Activated B cell treated with CpG ODN at 0.5 μM for 24 hours (primary cell): ENCODE measurements at regions of chr11 and their contacts with region 1.

Region 1: GRCh38 chr11:93741094-93741881 is at the starts of genes C11orf54 and TAF1D:
- DNase-seq: peak; percentile 88
- ATAC-seq: peak; percentile 91
- H3K4me3 Mint-ChIP-seq: peak within 1 kb of the TSS; percentile 100
- H3K27ac Mint-ChIP-seq: peak within 1 kb of the TSS; percentile 100
- H3K4me1 Mint-ChIP-seq: peaks cover 58% of the 10 kb centered on the region
- H3K27me3 Mint-ChIP-seq: no peaks in the 10 kb centered on the region
- CTCF ChIP-seq: no peak
- total RNA-seq, gene C11orf54: 23.7 and 30.1 TPM in 2 replicates
- total RNA-seq, gene TAF1D: 258 and 315 TPM in 2 replicates

Region 2: GRCh38 chr11:93623179-93623578 is 118.1 kb before region 1 on chr11:
- CTCF ChIA-PET with region 1: no interaction called
- POLR2A ChIA-PET with region 1: interaction called, 11 read pairs
- intact Hi-C with region 1: no loop called
- DNase-seq: no peak
- ATAC-seq: no peak
- H3K4me3 Mint-ChIP-seq: no peak overlapping the region
- H3K27ac Mint-ChIP-seq: no peak overlapping the region
- H3K4me1 Mint-ChIP-seq: no peaks in the 10 kb centered on the region
- H3K27me3 Mint-ChIP-seq: peaks cover 23% of the 10 kb centered on the region
- CTCF ChIP-seq: no peak

Region 3: DNA sequence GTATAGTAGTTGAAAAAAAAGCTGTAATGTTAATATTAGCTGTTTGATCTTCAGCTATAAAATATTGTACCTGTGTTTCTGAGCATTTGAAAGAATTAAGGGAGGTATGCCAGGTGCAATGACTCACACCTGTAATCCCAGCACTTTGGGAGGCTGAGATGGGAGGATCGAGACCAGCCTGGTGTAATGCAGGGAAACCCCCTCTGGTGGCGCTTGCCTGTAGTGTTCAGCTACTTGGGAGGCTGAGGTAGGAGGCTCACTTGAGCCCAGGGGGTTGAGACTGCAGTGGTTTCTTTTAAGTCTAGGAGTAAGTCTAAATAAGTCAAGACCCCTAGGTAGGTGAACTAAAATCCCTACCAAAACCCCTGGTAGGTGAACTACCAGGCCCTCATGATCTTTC is 37.1 kb before region 1 on chr11:
- CTCF ChIA-PET with region 1: no interaction called
- POLR2A ChIA-PET with region 1: interaction called, 16 read pairs
- intact Hi-C with region 1: no loop called
- DNase-seq: no peak
- ATAC-seq: no peak
- H3K4me3 Mint-ChIP-seq: no peak overlapping the region
- H3K27ac Mint-ChIP-seq: no peak overlapping the region
- H3K4me1 Mint-ChIP-seq: peaks cover 8% of the 10 kb centered on the region
- H3K27me3 Mint-ChIP-seq: no peaks in the 10 kb centered on the region
- CTCF ChIP-seq: no peak

Region 4: DNA sequence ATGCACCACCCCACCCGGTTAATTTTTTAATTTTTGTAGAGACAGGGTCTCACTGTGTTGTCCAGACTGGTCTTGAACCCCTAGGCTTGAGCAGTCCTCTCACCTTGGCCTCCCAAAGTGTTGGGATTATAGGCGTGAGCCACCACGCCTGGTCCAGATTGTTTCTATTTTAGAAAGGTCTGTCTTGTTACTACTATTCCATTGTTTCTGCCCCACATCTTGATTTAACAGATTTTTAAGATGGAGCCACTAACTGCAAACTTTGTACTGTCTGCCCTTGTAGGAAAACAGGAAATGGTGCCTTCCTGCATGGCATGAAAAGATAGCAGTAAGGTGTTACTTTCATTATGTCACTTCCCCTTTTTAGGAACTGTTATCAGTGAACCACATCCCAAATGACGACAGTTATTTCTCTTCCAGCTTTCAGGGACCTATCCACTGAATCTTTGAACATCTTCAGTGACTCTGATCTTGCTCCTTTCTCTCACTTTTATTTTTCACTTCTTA is 23.2 kb before region 1 on chr11:
- CTCF ChIA-PET with region 1: interaction called, 5 read pairs
- POLR2A ChIA-PET with region 1: interaction called, 99 read pairs
- intact Hi-C with region 1: loop called (anchors 1 kb)
- DNase-seq: no peak
- ATAC-seq: peak; percentile 82
- H3K4me3 Mint-ChIP-seq: peak overlapping the region; percentile 58
- H3K27ac Mint-ChIP-seq: peak overlapping the region; percentile 86
- H3K4me1 Mint-ChIP-seq: peaks cover 33% of the 10 kb centered on the region
- H3K27me3 Mint-ChIP-seq: no peaks in the 10 kb centered on the region
- CTCF ChIP-seq: no peak

Region 5: DNA sequence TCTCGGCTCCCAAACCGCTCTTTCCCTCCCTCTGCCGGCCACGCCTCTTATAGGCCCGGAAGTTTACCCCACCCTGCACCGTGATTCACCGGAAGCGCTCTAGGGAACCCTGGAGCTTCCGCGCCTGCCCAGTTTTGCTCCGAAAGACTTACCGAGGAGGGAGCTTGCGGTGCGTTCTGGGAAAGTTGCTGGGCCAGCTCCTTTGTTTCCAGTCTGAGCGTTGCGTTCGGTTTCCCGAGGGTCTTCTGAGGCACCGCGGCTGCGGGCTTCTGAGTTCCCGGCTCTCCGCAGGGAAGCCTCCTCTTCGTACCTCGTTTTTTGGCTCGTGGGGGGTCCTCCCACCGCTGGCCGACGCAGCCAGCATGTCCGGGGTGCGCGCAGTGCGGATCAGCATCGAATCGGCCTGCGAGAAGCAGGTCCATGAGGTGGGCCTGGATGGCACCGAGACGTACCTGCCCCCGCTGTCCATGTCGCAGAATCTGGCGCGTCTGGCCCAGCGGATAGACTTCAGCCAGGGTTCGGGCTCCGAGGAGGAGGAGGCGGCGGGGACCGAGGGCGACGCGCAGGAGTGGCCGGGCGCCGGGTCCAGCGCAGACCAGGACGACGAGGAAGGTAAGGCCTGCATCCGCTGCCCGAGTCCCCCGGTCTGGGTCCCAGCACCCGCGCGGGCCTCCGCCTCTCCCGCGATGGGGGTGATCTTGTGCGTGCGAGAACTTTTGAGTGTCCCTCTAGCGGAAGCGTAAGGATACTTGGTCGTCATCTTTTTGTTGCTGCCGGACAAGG is 43.1 kb after region 1 on chr11 and contains the start of gene MED17:
- CTCF ChIA-PET with region 1: interaction called, 20 read pairs
- POLR2A ChIA-PET with region 1: interaction called, 148 read pairs
- intact Hi-C with region 1: loop called (anchors 2 kb)
- DNase-seq: peak; percentile 75
- ATAC-seq: peak; percentile 93
- H3K4me3 Mint-ChIP-seq: peak within 1 kb of the TSS; percentile 99
- H3K27ac Mint-ChIP-seq: peak within 1 kb of the TSS; percentile 90
- H3K4me1 Mint-ChIP-seq: peaks cover 40% of the 10 kb centered on the region
- H3K27me3 Mint-ChIP-seq: no peaks in the 10 kb centered on the region
- CTCF ChIP-seq: no peak
- total RNA-seq, gene MED17: 47.9 and 55.2 TPM in 2 replicates

Region 6: GRCh38 chr11:94493281-94494125 is 752.2 kb after region 1 on chr11 and contains the starts of genes ANKRD49 and MRE11:
- CTCF ChIA-PET with region 1: no interaction called
- POLR2A ChIA-PET with region 1: interaction called, 13 read pairs
- intact Hi-C with region 1: loop called (anchors 1 kb)
- DNase-seq: peak; percentile 94
- ATAC-seq: peak; percentile 99
- H3K4me3 Mint-ChIP-seq: peak within 1 kb of the TSS; percentile 93
- H3K27ac Mint-ChIP-seq: peak within 1 kb of the TSS; percentile 92
- H3K4me1 Mint-ChIP-seq: peaks cover 39% of the 10 kb centered on the region
- H3K27me3 Mint-ChIP-seq: no peaks in the 10 kb centered on the region
- CTCF ChIP-seq: no peak
- total RNA-seq, gene ANKRD49: 39.5 and 46.5 TPM in 2 replicates
- total RNA-seq, gene MRE11: 39.7 and 40.1 TPM in 2 replicates